ENCODE measurements at regions of chr16 and their contacts with region 1.

Region 1: DNA sequence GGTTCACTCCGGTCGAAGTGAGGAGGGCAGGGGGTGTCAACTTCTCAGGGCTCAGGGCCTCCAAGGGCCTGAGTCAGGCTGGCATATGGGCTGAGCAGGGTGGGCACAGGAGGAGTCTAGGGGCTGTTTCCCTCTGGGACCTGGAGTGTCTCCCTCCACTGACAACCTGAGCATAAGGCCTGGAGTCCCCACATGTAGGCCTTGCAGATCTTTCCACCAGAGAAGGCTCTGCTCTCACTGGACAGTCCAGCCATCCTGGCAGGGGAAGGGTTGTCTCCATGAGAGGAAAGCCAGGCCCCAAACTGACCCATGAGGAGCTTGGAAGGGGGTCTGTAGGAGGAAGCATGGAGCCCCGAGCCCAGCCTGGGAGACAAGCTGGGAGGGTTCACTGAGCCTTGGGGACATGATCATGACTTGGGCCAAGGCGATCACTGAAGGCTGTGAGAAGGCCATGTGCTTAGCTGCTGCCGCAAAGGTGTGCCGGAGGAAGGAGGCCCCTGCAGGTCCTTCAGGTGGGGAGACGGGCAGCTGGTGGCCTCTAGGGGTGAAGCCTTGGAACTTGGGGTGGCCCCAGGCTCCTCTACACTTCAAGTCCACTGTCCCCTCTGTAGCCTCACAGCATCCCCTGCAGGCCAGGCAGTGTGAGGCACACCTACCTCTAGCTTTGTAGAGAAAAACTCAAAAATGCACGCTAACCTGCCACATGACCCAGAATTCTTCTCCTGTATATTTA is 9.9 kb downstream of the CMTM2 start:
- DNase-seq: no peak
- ATAC-seq: peak; percentile 98
- H3K4me3 ChIP-seq: no peak overlapping the region
- H3K27ac ChIP-seq: no peak overlapping the region
- H3K4me1 ChIP-seq: no peaks in the 10 kb centered on the region; the same call in 1 of the 2 replicates
- H3K27me3 ChIP-seq: peaks cover 0 to 4% of the 10 kb centered on the region in 2 experiments; a peak in 1 of 4 replicates
- CTCF ChIP-seq: peak; percentile 89 to 96 (median 91)
- EP300 ChIP-seq: no peak
- POLR2A ChIP-seq: no peak
- RAD21 ChIP-seq: peak; percentile 92

Region 2: GRCh38 chr16:66406534-66407221 is 182.5 kb before region 1 on chr16:
- CTCF ChIA-PET with region 1: interaction called, 48 read pairs
- POLR2A ChIA-PET with region 1: no interaction called
- RAD21 ChIA-PET with region 1: interaction called, 51 read pairs
- SMC1A ChIA-PET with region 1: interaction called, 30 read pairs
- in situ Hi-C with region 1: loop called (anchors 5 kb)
- intact Hi-C with region 1: loop called (anchors 1 kb)
- DNase-seq: no peak
- ATAC-seq: peak; percentile 97
- H3K4me3 ChIP-seq: peak overlapping the region; percentile 2; the same call in 1 of the 2 replicates
- H3K27ac ChIP-seq: no peak overlapping the region
- H3K4me1 ChIP-seq: peaks cover 4% of the 10 kb centered on the region; the same call in 1 of the 2 replicates
- H3K27me3 ChIP-seq: peaks cover 2% of the 10 kb centered on the region in 2 experiments; a peak in 2 of 4 replicates
- CTCF ChIP-seq: peak; percentile 69 to 93 (median 79)
- EP300 ChIP-seq: no peak
- POLR2A ChIP-seq: no peak
- RAD21 ChIP-seq: peak; percentile 85

Region 3: DNA sequence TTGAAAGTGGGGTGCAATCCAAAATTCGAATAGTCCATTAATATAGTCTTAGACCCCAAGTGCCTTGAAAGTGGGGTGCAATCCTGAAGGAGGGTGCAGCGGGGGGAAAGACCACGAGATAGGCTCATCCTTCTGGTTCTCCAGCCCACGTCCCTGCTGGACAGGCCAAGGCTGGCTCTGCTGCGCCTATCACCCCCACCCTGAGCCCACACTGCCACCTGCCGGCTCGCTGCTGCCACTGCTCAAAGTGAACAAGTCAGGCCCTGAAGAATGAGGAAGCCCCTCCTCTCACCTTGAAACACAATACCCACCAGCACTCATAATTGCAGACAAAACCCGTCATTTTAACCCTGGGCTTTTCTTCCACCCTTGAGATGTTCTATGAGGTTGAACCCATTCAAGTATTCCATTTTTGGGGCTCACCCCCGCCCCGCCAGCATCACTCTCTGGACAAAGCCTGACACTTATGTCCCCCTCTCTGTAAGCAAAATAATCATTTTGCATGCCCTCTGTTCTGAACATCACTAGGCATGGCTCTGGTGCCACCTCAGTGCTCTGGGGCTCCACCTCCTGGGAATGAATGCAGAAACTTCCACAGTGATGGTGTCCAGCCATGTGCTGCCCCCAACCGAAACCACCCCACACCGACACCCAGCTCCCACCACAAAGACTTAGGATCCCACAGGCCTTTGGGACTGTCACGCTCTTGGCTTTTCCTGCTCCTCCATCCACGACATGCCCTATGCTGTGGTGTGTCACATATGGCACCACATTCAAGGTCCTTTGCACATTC is 105.3 kb before region 1 on chr16:
- CTCF ChIA-PET with region 1: interaction called, 61 read pairs
- POLR2A ChIA-PET with region 1: interaction called, 3 read pairs
- RAD21 ChIA-PET with region 1: interaction called, 9 read pairs
- SMC1A ChIA-PET with region 1: interaction called, 6 read pairs
- in situ Hi-C with region 1: no loop called
- intact Hi-C with region 1: no loop called
- DNase-seq: no peak
- ATAC-seq: peak; percentile 88
- H3K4me3 ChIP-seq: no peak overlapping the region
- H3K27ac ChIP-seq: no peak overlapping the region
- H3K4me1 ChIP-seq: peaks cover 5% of the 10 kb centered on the region
- H3K27me3 ChIP-seq: no peaks in the 10 kb centered on the region
- CTCF ChIP-seq: peak; percentile 96 to 99 (median 98)
- EP300 ChIP-seq: no peak
- POLR2A ChIP-seq: no peak
- RAD21 ChIP-seq: peak; percentile 90

Region 4: GRCh38 chr16:66552286-66553177 is 36.6 kb before region 1 on chr16 and contains the start of gene CKLF:
- CTCF ChIA-PET with region 1: interaction called, 13 read pairs
- POLR2A ChIA-PET with region 1: interaction called, 4 read pairs
- RAD21 ChIA-PET with region 1: interaction called, 8 read pairs
- SMC1A ChIA-PET with region 1: interaction called, 8 read pairs
- in situ Hi-C with region 1: no loop called
- intact Hi-C with region 1: no loop called
- DNase-seq: peak; percentile 66
- ATAC-seq: peak; percentile 78
- H3K4me3 ChIP-seq: peak within 1 kb of the TSS; percentile 62
- H3K27ac ChIP-seq: peak within 1 kb of the TSS; percentile 33
- H3K4me1 ChIP-seq: peaks cover 23% of the 10 kb centered on the region
- H3K27me3 ChIP-seq: no peaks in the 10 kb centered on the region
- CTCF ChIP-seq: no peak
- EP300 ChIP-seq: no peak
- POLR2A ChIP-seq: peak; percentile 95
- RAD21 ChIP-seq: no peak
- polyA plus RNA-seq, gene CKLF: 181 to 193 TPM

Region 5: DNA sequence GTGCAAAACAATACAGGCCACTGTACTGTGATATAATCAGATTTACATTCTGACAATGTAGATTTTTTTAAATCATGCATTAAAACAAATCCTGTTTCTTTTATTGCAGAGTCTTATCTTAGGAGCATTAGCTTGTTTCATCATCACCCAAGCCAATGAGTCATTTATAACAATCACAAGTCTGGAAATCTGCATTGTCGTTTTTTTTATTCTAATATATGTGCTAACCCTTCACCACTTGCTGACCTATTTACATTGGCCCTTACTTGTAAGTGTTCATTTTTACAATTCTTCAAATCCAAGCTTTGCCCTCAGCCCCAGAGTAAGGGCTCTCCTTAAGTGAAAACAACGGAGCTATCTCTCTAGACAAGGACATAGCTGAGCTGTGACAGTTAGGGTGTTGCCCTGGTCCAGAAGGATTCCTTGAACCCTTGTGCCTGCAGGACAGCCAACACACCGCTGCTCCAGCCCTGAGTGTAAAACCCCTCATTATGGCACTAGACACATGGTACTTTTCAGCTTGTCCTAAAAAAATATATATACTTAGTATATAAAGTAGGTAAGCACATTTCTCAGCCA is 19.2 kb before region 1 on chr16:
- CTCF ChIA-PET with region 1: interaction called, 47 read pairs
- POLR2A ChIA-PET with region 1: no interaction called
- RAD21 ChIA-PET with region 1: interaction called, 4 read pairs
- SMC1A ChIA-PET with region 1: interaction called, 7 read pairs
- in situ Hi-C with region 1: no loop called
- intact Hi-C with region 1: no loop called
- DNase-seq: no peak
- ATAC-seq: no peak
- H3K4me3 ChIP-seq: no peak overlapping the region
- H3K27ac ChIP-seq: no peak overlapping the region
- H3K4me1 ChIP-seq: no peaks in the 10 kb centered on the region
- H3K27me3 ChIP-seq: peaks cover 0 to under 1% of the 10 kb centered on the region in 2 experiments; a peak in 1 of 4 replicates
- CTCF ChIP-seq: no peak
- EP300 ChIP-seq: no peak
- POLR2A ChIP-seq: no peak
- RAD21 ChIP-seq: no peak